Endothelial cell of umbilical vein (primary cell): ENCODE measurements at regions of chr13 and their contacts with region 1.

Region 1: DNA sequence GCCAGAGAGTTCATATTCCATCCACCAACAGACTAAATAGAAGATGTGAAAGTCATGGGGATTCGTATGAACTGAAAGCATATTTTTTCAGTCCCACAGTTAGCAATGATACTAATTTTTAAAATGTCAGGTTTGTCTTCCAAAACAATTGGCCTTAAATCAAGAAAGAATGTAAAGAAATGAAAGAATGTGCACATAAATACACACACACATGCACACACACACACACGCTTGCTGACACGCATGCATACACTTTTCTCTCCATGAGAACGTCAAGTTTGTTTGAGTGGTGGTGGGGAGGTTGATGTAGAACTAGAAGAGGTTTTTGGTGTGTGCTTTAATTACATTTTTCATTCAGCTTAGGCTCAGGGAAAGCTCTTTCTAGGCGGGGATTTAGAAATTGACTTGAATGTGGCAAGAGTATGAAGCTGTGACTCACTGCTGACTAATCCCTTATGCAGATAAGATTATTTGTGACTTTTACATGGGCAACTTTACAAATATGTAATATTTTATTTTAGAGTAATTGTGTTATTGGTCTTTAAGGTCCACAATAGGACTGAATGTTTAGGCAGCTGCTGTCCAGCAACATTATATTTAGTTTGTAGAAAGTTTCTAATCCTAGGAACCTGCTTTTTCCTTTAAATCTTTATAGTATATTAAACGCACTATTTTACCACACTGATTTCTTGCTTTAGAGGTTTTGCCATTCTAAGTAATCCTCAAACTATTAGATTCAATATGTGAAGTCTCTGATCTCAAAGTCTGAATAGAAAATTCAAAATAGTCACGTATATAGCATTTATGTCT is 18.8 kb downstream of the FLT1 start:
- DNase-seq: peak; percentile 86
- H3K4me3 ChIP-seq: no peak overlapping the region
- H3K27ac ChIP-seq: peak overlapping the region; percentile 59
- H3K4me1 ChIP-seq: peaks cover 61% of the 10 kb centered on the region
- H3K27me3 ChIP-seq: no peaks in the 10 kb centered on the region
- CTCF ChIP-seq: no peak
- POLR2A ChIP-seq: no peak

Region 2: DNA sequence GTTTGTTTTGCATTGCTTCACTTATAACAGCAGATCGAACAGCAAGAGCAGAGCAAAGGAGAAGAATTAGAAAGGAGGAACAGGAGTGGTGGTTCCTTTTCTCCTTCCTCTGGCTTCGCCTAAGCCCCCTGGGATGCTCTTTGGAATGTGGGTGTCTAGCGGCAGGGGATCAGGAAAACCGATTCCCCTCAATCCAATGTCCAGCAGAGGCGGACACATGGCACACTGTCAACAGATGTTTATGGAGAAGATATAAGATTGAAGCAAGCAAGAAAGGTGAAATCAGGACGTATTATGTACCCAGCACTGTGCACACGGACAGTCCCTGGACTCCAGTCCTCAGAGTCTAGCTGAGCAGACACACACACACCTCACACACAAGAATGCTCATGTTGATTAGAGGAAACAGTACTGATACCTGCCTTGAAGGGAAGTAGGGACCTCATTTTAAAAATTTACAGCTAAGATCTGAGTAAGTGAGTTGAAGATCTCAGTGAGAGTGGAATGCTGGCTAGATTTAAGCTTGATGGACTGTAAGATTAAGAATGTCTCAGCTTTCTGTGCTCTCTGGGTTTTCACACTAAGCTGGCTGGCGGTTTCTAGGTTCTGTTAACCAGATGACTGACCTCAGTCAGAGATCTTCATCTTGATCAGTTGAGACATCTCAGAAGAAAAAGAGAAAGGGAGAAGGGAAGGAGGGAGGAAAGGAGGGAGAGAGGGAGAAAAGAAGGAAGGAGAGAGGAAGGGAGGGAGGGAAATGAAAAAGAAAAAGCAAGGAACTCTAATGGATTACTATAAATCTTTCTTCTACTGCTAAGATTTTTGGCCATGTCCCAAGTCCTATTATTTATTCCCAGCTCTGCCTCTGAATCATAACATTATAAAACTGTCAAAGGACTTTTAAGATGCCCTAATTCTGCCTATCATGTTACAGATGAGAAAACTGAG is 26.0 kb before region 1 on chr13:
- CTCF ChIA-PET with region 1: no interaction called
- POLR2A ChIA-PET with region 1: no interaction called
- dilution Hi-C with region 1: no loop called
- intact Hi-C with region 1: loop called (anchors 1 kb)
- DNase-seq: peak; percentile 77
- H3K4me3 ChIP-seq: no peak overlapping the region
- H3K27ac ChIP-seq: peak overlapping the region; percentile 58
- H3K4me1 ChIP-seq: peaks cover 28% of the 10 kb centered on the region
- H3K27me3 ChIP-seq: no peaks in the 10 kb centered on the region
- CTCF ChIP-seq: no peak
- POLR2A ChIP-seq: no peak